ENCODE measurements at regions of chr6 and their contacts with region 1.

Region 1: GRCh38 chr6:129748212-129748900 is 38.4 kb upstream of the ARHGAP18 start:
- DNase-seq: peak; percentile 50
- H3K4me3 ChIP-seq: no peak overlapping the region
- H3K27ac ChIP-seq: peak overlapping the region; percentile 50 to 68 (median 58)
- H3K4me1 ChIP-seq: peaks cover 0 to 33% (median 1%) of the 10 kb centered on the region in 4 donors
- H3K27me3 ChIP-seq: no peaks in the 10 kb centered on the region
- CTCF ChIP-seq: no peak
- EP300 ChIP-seq: no peak
- POLR2A ChIP-seq: no peak

Region 2: DNA sequence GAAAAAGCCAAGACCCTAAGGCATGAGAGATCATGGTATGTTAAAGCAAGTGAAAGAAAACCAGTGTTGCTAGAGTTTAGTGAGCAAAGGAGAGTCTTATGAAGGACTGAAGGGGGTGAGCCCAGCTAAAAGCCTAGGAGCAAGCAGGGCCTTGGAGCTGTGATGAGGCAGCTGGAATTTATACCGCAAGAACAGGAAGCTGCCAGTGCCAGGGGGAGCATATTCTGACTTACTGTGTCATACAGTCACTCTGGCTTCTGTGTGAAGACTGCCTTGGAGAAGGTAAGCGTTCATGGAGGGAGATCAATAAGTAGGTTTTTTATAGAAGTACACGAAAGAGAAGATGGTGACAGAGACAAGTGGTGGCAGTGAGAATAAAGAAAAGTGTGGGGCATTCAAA is 1538.6 kb before region 1 on chr6:
- in situ Hi-C with region 1: no loop called
- intact Hi-C with region 1: loop called (anchors 5 kb)
- DNase-seq: no peak
- H3K4me3 ChIP-seq: no peak overlapping the region
- H3K27ac ChIP-seq: no peak overlapping the region
- H3K4me1 ChIP-seq: no peaks in the 10 kb centered on the region
- H3K27me3 ChIP-seq: no peaks in the 10 kb centered on the region
- CTCF ChIP-seq: no peak
- EP300 ChIP-seq: no peak
- POLR2A ChIP-seq: no peak

Region 3: DNA sequence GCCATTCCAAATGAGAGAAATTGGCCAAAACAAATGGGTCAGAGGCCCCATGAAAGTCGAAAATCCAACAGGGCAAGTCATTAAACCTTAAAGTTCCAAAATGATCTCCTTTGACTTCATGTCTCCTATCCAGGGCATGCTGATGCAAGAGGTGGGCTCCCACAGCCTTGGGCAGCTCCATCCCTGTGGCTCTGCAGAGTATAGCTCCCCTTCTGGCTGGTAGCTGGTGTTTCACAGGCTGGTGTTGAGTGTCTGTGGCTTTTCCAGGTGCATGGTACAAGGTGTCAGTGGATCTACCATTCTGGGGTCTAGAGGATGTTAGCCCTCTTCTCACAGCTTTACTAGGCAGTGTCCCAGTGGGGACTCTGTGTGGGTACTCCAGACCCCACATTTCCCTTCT is 980.7 kb before region 1 on chr6:
- in situ Hi-C with region 1: no loop called
- intact Hi-C with region 1: no loop called
- DNase-seq: no peak
- H3K4me3 ChIP-seq: no peak overlapping the region
- H3K27ac ChIP-seq: no peak overlapping the region
- H3K4me1 ChIP-seq: no peaks in the 10 kb centered on the region
- H3K27me3 ChIP-seq: no peaks in the 10 kb centered on the region
- CTCF ChIP-seq: no peak
- EP300 ChIP-seq: no peak
- POLR2A ChIP-seq: no peak

Region 4: DNA sequence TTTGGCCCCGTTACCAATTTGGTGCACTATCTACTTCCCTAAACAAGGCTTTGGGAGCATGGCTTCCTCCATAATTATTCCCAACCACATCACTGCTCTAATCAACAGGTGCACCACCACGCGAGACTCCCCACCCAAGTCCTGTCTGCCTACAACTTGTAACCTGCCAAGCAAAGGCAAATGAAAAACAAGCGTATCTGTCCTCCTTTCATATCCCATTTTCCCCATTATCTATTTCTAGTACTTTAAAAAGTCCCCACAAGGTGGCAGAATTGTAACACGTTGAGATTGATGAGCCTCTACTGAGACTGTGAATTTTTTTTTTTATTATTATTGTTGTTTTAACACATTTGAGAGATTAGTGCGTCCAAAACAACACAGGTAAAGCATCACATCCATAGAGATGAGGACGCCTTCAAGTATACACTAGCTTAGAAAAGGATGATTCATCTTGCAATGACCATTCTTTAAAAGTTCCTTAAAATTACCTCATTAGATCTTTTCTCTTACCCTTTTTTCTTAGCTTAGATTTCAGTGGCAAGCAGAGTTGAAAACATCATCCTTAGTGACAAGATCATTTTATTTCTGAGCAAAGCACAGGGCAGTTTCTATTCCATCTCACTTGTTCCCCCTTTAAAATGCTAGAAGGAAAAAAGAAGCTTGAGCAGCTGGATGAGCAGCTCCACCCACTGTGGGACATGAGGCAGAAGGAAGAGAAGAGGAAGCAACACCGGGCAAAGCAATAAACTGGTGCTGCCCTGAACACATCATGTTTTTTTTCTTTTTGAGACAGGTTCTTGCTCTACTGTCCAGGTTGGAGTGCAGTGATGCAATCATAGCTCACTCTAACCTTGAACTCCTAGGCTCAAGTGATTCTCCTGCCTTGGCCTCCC is 249.2 kb before region 1 on chr6:
- in situ Hi-C with region 1: loop called in 2 of 4 experiments (anchors 25 kb)
- intact Hi-C with region 1: no loop called
- DNase-seq: no peak
- H3K4me3 ChIP-seq: no peak overlapping the region
- H3K27ac ChIP-seq: no peak overlapping the region
- H3K4me1 ChIP-seq: peaks cover 0 to 9% (median 1%) of the 10 kb centered on the region in 4 donors
- H3K27me3 ChIP-seq: no peaks in the 10 kb centered on the region
- CTCF ChIP-seq: peak; percentile 52 to 67 (median 63)
- EP300 ChIP-seq: no peak
- POLR2A ChIP-seq: no peak

Region 5: DNA sequence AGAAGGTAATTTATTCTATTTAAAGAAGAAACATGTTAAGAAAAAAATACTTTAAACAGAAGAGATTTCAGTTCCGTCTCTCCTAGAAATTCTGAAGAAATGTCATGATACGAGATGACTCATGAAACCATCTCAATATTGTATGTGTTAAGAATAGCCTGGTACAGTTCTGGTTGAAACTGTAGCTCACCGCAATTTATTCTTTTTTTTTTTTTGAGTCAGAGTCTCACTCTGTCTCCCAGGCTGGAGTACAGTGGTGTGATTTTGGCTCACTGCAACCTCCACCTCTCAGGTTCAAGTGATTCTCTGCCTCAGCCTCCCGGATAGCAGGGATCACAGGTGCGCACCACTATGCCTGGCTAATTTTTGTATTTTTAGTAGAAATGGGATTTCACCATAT is 141.7 kb before region 1 on chr6:
- in situ Hi-C with region 1: loop called in 1 of 4 experiments (anchors 25 kb)
- intact Hi-C with region 1: loop called (anchors 5 kb)
- DNase-seq: no peak
- H3K4me3 ChIP-seq: no peak overlapping the region
- H3K27ac ChIP-seq: no peak overlapping the region
- H3K4me1 ChIP-seq: peaks cover 0 to 12% (median 5%) of the 10 kb centered on the region in 4 donors
- H3K27me3 ChIP-seq: no peaks in the 10 kb centered on the region
- CTCF ChIP-seq: no peak
- EP300 ChIP-seq: no peak
- POLR2A ChIP-seq: no peak

Region 6: GRCh38 chr6:129621247-129621646 is 127.1 kb before region 1 on chr6:
- in situ Hi-C with region 1: loop called in 1 of 4 experiments (anchors 25 kb)
- intact Hi-C with region 1: no loop called
- DNase-seq: peak; percentile 24
- H3K4me3 ChIP-seq: no peak overlapping the region
- H3K27ac ChIP-seq: no peak overlapping the region
- H3K4me1 ChIP-seq: no peaks in the 10 kb centered on the region
- H3K27me3 ChIP-seq: no peaks in the 10 kb centered on the region
- CTCF ChIP-seq: peak in 4 of 5 experiments; percentile 16 to 29 (median 24)
- EP300 ChIP-seq: no peak
- POLR2A ChIP-seq: no peak

Region 7: DNA sequence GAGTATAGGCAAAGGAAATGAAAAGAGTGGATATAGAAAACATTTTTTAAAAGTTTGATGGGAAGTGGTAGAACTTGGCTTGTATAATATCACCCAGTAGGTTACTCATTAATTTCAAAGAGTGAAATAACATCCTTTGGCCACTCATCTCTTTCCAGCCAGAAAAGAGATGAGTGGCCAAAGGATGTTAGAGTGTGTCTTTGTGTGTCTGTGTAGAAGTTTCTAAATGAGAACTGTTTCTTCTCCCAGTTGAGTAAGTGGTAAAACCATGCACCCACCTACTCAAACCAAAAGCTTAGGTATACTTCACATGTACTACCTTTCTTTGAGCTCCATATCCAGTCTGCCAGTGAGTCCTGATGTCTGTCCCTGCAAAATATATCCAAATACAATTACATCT is 160.5 kb after region 1 on chr6:
- in situ Hi-C with region 1: no loop called
- intact Hi-C with region 1: no loop called
- DNase-seq: no peak
- H3K4me3 ChIP-seq: no peak overlapping the region
- H3K27ac ChIP-seq: no peak overlapping the region
- H3K4me1 ChIP-seq: no peaks in the 10 kb centered on the region
- H3K27me3 ChIP-seq: no peaks in the 10 kb centered on the region
- CTCF ChIP-seq: no peak
- EP300 ChIP-seq: no peak
- POLR2A ChIP-seq: no peak

Region 8: DNA sequence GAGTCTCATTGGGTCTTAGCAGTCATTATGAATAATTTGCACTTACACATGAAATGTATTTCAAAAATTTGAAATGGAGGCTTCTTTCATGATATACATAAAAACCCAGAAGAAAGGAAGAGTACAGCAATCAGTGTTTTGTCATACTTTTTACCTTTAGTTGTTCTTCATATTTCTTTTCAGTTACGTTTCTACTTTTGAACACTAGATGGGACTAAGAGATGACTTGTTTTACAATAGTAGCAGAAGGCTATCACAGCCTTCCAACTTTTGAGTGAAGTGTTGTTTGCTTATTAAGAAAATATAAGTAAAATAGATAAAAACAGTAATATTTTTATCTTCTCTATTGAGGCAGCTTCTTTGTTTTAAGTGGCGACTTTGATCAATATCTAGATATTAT is 328.2 kb after region 1 on chr6:
- in situ Hi-C with region 1: no loop called
- intact Hi-C with region 1: no loop called
- DNase-seq: no peak
- H3K4me3 ChIP-seq: no peak overlapping the region
- H3K27ac ChIP-seq: no peak overlapping the region
- H3K4me1 ChIP-seq: no peaks in the 10 kb centered on the region
- H3K27me3 ChIP-seq: no peaks in the 10 kb centered on the region
- CTCF ChIP-seq: no peak
- EP300 ChIP-seq: no peak
- POLR2A ChIP-seq: no peak